PC-9 (cell line): ENCODE measurements at regions of chr19 and their contacts with region 1.

Region 1: GRCh38 chr19:16070366-16070990 is 5.8 kb upstream of the TPM4 start:
- DNase-seq: peak; percentile 96 to 100
- H3K4me3 ChIP-seq: peak overlapping the region; percentile 41; the same call in 1 of the 2 replicates
- H3K27ac ChIP-seq: peak overlapping the region; percentile 81
- H3K4me1 ChIP-seq: peaks cover 44% of the 10 kb centered on the region
- H3K27me3 ChIP-seq: no peaks in the 10 kb centered on the region
- CTCF ChIP-seq: no peak; the same call in 1 of the 2 replicates

Region 2: GRCh38 chr19:16034180-16034579 is 36.3 kb before region 1 on chr19:
- CTCF ChIA-PET with region 1: no interaction called
- POLR2A ChIA-PET with region 1: no interaction called
- intact Hi-C with region 1: no loop called
- DNase-seq: no peak
- H3K4me3 ChIP-seq: no peak overlapping the region
- H3K27ac ChIP-seq: no peak overlapping the region
- H3K4me1 ChIP-seq: no peaks in the 10 kb centered on the region
- H3K27me3 ChIP-seq: no peaks in the 10 kb centered on the region
- CTCF ChIP-seq: no peak

Region 3: DNA sequence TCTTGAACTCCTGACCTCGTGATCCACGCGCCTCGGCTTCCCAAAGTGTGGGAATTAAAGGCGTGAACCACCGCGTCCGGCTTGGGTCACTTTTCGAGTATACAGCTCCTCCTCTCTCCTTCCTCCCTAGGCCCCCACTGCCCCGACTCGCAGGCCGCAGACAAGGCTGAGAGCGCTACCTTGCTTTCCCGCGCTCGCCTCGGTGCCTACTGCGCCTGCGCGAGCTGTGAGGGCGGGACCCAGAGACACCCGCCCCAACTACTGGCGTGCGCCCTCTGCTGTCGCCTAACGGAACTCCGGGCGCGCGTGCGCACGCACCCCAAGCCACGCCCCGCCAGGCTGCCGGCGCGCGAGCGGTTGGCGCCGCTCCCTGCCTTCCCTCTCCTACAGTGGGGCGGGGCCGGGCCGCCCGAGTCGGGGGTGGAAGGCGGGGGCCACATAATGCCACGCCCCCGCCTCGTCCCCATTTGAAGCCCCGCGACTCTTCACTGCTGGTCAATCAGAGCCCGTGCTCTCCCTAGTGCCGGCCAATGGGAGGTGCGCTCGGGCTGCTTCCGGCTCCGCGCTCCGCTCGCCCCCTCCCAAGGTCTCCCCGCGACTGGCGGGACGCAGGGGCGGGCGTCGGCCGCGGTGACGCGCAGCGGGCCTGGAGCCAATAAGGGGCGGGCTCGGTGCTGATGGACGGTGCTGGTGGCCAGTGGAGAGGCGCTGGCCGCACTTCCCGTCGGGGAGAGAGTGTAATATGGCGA is 40.9 kb after region 1 on chr19 and contains the start of gene RAB8A:
- CTCF ChIA-PET with region 1: interaction called, 3 read pairs
- POLR2A ChIA-PET with region 1: interaction called, 16 read pairs
- intact Hi-C with region 1: loop called (anchors 1 kb)
- DNase-seq: peak; percentile 97 to 99
- H3K4me3 ChIP-seq: peak within 1 kb of the TSS; percentile 97
- H3K27ac ChIP-seq: peak within 1 kb of the TSS; percentile 72
- H3K4me1 ChIP-seq: peaks cover 12% of the 10 kb centered on the region
- H3K27me3 ChIP-seq: no peaks in the 10 kb centered on the region
- CTCF ChIP-seq: peak; percentile 92
- total RNA-seq, gene RAB8A: 87.9 and 104 TPM in 2 replicates